GM10248 (cell line): ENCODE measurements at regions of chr5 and their contacts with region 1.

Region 1: DNA sequence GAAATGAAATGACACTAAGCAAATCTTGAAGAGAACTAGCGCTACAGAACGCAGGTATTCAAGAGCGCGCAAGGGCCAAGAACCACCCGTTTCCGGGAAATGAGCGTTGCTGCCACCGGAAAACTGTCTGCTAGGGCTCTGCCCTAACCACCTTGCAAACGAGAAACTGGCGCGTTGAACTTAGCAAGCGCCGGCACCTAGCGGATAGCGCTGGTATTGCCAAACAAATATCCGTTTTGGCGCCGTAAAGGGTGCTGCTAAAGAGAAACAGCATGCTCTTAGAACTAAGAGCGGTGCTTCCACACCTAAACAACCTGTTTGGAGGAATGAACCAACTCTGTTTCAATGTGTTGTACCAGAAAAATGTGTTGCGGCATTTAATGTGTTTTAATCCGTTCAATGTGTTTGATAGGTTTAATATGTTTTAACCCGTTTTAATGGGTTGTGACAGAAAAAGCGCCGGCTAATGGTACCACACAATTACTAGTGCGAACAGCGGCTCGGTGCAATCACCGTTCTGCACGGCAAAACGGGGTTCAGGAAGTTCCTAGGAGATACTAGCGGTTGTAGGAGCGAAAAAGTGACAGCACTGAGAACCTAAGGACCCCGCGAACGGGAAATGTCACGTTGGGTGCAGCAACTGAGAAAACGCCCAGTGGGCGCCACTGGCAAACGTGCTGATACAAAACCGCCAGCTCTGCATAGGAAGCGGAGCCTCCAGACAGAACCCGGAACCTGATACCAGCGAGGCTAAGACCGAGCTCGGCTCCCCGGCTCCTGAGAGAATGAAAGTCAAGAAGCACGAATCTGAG is at the start of gene ANXA2R:
- DNase-seq: peak; percentile 62
- CTCF ChIP-seq: peak; percentile 88

Region 2: DNA sequence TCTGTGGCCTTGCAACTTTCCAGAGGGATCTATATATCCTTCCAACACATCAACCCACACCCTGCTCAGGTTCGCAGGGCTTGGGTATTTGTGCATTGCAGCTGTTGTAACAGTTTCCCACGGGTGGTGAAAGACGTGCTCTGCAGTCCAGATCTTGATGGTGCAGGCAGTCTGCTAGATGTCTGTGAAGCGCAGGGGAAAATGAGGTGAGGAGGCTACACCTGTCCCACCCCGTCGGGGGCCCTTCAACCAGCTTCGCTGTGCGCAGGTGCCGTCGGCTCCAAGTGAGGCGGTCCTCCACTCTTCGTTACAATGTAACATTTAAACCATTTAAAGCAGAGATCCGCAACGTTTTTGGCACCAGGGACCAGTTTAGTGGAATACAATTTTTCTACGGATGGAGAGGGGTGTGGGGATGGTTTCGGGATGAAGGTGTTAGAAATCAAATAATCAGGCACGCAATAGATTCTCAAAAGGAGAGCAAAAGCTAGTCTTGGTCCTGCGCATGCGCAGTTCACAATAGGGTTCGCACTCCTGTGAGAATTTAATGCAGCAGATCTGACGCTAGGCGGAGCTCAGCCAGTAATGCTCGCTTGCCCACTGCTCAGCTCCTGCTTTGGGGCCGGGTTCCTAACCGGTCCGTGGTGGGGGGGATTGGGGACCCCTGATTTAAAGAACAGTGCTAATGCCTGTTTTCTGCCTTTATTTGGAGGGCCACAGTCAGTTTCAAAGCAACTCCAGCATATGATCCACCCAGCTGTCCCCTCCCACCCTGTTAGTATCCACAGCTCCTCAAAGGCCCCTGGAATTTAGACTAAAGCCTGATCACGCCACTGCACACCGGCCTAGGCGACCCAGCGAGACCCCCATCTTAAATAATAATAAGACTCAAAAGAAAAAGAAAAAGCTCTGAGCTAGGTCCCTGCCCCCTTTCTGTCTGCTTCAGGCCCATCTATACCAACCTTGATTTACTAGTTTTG is 131.7 kb before region 1 on chr5:
- CTCF ChIA-PET with region 1: interaction called, 11 read pairs
- POLR2A ChIA-PET with region 1: no interaction called
- DNase-seq: peak; percentile 85
- CTCF ChIP-seq: peak; percentile 79

Region 3: DNA sequence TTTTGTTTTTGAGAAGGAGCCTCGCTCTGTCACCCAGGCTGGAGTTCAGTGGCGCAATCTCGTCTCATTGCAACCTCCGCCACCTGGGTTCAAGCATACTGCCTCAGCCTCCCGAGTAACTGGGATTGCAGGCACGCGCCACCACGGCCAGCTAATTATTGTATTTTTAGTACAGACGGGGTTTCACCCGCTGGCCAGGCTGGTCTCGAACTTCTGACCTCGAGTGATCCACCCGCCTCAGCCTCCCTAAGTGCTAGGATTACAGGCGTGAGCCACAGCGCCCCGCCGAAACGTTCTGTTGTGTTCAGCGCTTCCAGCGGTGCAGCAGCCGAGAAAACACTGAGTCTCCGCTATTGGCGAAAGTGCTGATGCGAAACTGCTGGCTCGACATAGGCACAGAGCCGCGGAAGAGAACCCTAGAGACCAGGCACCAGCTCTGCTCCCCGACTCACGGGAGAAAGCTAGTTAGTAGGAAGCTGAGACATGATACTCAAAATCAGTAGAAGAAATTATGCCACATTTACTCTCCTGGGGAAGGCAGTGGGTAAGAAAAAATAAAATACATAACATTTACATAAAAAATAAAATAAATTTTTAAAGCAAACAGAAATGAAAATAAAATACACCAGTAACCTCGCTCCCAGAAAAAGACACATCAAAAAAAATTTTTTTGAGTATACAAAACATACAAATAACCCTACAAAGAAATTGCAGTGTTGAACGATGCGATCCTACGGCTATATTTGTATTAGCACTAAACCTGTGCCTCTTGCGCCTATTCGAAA is 31.9 kb before region 1 on chr5:
- CTCF ChIA-PET with region 1: interaction called, 20 read pairs
- POLR2A ChIA-PET with region 1: interaction called, 4 read pairs
- DNase-seq: peak; percentile 73
- CTCF ChIP-seq: peak; percentile 32

Region 4: DNA sequence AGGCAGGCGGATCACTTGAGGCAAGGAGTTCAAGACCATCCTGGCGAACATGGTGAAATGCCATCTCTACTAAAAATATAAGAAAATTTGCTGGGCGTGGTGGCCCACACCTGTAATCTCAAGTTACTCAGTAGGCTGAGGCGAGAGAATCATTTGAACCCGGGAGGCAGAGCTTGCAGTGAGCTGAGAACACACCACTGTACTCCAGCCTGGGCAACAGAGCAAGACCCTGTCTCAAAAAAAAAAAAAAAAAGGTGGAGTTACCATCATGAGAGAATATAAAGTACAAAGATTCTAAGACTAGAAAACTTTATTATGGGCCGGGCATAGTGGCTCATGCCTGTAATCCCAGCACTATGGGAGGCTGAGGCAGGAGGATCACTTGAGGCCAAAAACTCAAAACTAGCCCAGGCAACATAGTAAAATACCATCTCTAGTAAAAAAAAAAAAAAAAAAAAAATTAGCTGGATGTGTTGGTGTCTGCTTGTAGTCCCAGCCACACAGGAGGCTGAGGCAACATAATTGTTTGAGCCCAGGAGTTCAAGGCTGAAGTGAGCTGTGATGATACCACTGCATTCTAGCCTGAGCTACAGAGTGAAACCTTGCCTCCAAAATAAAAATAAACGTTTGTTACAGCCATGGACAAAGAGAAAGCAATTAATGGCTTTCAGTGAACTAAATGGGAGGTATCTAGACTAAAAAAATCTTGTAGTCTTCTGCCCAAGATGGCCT is 13.3 kb before region 1 on chr5:
- CTCF ChIA-PET with region 1: interaction called, 51 read pairs
- POLR2A ChIA-PET with region 1: no interaction called
- DNase-seq: no peak
- CTCF ChIP-seq: no peak

Region 5: DNA sequence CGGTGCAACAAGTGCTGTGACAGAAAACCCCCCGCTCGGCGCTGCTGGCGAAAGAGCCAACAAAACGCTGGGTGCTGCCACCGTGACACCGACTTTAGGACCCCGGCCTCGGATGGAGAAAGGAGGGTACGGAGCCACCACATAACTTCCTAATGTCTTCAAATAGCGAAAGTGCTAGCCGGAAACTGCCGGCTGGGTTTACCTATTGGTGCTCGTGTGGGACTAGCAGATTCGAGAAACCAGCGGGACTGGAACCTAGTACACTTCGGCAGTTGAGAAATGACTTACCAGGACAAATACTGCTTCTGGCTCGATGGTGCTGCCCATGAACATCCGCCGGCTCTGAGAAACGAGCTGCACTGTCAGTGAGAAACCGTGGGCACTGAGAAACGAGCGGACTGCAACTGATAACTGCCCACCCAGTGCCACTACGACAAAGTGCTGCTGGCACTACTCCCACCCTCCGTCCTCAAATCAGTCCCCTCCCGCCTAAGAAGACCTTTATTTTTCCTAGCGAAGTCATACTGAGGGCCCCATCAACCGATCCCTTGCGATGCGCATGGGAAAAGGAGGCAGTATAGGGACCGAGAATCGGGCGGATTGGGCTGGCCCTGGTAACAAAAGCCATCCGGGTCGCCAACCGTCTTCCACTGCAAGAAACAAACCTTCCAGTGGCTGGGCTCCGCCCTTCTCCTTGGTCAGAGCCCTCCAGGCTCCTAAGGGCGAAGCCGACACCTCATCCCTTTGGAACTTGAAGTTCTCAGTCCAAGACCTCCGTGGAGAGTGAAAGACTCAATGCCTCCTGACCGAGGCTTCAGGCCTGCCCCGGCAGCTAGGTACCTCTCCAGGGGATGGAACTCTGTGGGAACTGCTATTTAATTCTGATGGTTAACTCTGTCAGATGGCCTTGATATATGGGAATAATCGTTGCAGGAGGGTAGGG is 26.6 kb after region 1 on chr5:
- CTCF ChIA-PET with region 1: interaction called, 26 read pairs
- POLR2A ChIA-PET with region 1: interaction called, 4 read pairs
- DNase-seq: peak; percentile 74
- CTCF ChIP-seq: no peak